ENCODE measurements at regions of chr2 and their contacts with region 1.

Region 1: DNA sequence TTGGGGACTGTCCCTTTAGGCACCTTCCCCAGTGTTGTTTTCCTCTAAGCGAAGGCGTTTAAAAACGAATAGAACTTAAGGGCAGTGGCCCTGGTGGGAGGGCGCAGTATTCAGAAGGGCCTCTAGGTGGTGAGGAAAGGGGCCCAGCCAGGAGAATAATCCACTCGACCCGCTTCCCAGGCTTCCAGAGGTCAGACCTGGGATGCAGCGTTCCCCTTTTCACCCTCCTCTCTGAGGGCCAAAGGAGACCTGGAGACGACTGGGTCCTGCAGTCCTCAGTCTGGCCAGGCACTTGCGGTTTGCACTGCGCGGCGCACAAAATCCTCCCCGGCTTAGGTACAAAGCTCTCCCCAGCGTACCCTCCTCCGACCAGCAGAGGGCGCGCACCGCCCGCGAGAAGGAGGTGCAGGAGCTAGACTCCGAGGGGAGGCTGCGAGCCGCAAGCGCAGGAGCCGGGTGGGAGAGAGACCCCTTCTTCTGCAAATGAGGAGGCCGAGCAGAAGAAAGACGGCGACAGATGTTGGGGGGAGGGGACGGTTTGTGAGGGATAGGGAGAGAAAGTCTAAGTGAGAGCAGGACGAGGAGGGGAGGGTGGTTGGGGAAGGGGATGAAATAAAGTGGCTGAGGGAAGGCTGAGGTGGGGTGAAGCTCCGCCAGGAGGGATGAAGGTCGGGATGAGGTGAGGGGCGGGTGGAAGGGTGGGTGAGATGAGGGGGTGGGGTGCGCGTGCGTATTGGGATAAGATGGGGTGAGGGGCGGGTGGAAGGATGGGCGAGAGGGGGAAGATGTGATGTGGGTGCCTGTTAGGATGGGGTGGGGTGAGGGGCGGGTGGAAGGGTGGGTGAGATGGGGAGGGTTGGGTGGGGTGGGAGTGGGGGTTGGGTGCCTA is 4.9 kb downstream of the FEV start:
- DNase-seq: peak; percentile 92
- H3K4me3 Mint-ChIP-seq: peak overlapping the region; percentile 51
- H3K27ac Mint-ChIP-seq: no peak overlapping the region
- H3K4me1 Mint-ChIP-seq: peaks cover 28% of the 10 kb centered on the region
- H3K27me3 Mint-ChIP-seq: peaks cover 91% of the 10 kb centered on the region
- CTCF ChIP-seq: peak; percentile 93

Region 2: DNA sequence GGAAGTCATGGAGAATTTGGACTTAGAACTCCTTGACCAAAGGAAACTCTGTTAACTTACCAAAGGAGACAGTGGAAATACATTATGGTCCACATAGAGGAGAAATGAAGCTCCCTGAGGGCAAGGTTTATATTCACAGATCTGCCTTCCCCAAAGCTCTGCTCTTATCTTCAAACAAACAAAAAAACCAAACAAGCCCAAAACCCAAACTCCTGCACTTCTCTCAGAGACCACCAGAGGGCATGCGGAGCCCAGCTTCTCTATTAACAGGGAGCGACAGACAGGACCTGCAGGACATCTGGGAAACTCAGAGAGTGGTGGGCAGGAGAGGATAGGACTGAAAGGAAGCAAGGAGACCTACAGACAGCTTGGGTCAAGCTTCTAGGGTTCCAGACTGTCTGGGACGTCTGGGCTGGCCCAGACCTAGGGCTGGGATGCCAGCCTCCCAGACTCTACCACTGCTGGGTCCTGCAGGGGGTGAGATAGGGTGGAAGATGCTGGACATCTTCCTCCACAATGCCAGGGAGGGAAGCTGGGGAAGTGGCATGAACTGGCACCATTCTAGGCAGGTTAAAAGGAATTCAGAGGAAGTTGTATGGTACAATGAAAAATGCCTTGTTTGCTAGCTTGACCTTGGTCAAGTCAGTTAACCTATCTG is 103.4 kb before region 1 on chr2:
- CTCF ChIA-PET with region 1: interaction called, 13 read pairs
- intact Hi-C with region 1: loop called (anchors 5 kb)
- DNase-seq: peak; percentile 82
- H3K4me3 Mint-ChIP-seq: no peak overlapping the region
- H3K27ac Mint-ChIP-seq: no peak overlapping the region
- H3K4me1 Mint-ChIP-seq: peaks cover 15% of the 10 kb centered on the region
- H3K27me3 Mint-ChIP-seq: peaks cover 65% of the 10 kb centered on the region
- CTCF ChIP-seq: peak; percentile 95

Region 3: DNA sequence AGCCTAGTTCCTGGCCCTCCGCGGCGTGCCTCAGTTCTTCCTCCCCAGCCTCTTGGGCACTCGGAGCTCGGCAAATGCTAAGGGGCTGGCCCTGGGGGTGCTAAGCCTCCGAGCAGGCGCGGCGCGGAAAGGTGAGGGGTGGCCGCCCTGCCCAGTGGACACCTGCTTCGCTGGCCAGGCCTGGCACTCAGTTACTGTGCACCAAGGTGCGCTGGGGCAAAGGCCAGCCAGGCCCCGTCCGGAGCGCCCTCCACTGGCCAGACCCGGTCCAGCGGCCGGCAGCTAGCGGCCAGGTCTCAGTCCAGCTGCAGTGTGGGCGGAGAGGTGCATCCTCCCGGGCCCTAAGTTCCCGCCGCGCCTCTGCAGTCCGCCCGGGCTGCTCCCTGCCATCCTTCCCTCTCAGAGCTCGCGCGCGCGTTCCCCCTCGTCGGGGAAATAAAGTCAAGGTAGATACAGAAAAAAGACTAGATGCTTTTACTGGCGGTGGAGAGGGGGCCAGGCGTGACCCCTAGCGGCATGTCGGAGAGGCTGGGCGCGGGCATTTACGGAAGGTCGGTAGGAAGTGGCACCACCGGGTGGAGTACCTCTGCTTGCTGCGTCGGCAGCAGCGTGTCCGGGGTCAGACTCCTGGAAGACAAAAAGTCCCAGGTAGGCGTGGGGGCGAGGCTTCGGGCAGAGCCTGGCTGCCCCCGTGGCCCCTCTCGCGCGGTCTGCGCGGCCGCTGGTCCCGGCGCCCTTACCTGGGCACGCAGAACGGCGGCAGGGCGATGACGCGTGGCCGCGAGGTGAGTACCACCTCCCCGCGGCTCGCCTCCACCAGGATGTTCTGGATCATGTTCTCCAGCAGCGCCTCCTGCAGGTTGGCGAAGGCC is 22.5 kb after region 1 on chr2:
- CTCF ChIA-PET with region 1: interaction called, 18 read pairs
- intact Hi-C with region 1: no loop called
- DNase-seq: peak; percentile 86
- H3K4me3 Mint-ChIP-seq: peak overlapping the region; percentile 76
- H3K27ac Mint-ChIP-seq: no peak overlapping the region
- H3K4me1 Mint-ChIP-seq: peaks cover 31% of the 10 kb centered on the region
- H3K27me3 Mint-ChIP-seq: peaks cover 60% of the 10 kb centered on the region
- CTCF ChIP-seq: peak; percentile 65

Region 4: GRCh38 chr2:219010162-219010756 is 30.2 kb after region 1 on chr2:
- CTCF ChIA-PET with region 1: interaction called, 14 read pairs
- intact Hi-C with region 1: no loop called
- DNase-seq: peak; percentile 73
- H3K4me3 Mint-ChIP-seq: no peak overlapping the region
- H3K27ac Mint-ChIP-seq: no peak overlapping the region
- H3K4me1 Mint-ChIP-seq: no peaks in the 10 kb centered on the region
- H3K27me3 Mint-ChIP-seq: peaks cover 40% of the 10 kb centered on the region
- CTCF ChIP-seq: peak; percentile 71

Measured in Calu3 (cell line).